Sigmoid colon (tissue), 7 donors: ENCODE measurements at regions of chr18 and their contacts with region 1.

Region 1: GRCh38 chr18:49944663-49945062 is 131.3 kb upstream of the ACAA2 start:
- DNase-seq: peak; percentile 69
- H3K4me3 ChIP-seq: no peak overlapping the region
- H3K27ac ChIP-seq: no peak overlapping the region
- H3K4me1 ChIP-seq: no peaks in the 10 kb centered on the region
- H3K27me3 ChIP-seq: no peaks in the 10 kb centered on the region
- CTCF ChIP-seq: peak in 3 of 4 experiments; percentile 15 to 47 (median 17)
- EP300 ChIP-seq: no peak
- POLR2A ChIP-seq: no peak

Region 2: DNA sequence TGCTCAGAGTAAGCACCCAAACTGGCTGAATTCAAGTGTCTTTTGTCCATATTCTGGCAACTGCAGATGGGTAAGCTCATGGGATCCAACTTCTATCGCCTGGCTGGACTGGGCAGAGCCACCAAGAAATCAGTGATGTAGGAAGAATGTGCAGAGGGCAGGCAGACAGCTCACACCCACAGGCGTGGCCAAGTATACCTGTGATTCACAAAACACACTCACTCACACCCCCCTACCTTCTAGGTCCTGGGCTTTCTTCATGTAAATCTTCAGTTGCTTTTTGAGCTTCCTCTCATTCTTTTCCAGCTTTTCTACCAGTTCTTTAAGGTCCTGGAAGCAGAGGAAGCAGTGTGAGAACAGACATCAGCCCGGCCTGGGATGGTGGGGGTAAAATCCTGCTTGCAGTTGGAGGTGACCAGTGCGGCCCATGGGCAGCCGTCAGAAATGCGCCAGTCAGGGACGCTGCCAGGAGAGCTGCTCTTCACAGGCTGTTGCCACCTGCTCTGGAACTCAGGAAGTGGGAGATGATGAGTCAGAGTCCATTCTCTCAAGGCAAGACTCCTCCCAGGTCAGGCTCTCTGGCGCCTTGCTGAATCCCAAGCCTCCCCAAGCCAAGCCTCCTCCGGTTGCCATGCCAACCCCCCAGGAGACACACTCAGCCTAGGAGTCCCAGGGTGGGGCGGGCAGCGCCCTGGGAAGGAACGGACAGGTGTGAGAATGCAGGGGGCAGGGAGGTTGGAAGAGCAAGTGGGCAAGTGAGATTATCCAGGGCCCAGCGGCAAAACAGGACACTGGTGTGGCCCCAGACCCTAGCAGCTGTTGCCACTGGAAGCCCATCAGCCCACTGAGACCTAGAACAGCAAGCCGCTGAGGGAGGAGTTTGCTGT is 95.1 kb before region 1 on chr18:
- intact Hi-C with region 1: no loop called
- DNase-seq: no peak
- H3K4me3 ChIP-seq: no peak overlapping the region
- H3K27ac ChIP-seq: no peak overlapping the region
- H3K4me1 ChIP-seq: peaks cover 0 to 9% (median 0%) of the 10 kb centered on the region in 4 donors
- H3K27me3 ChIP-seq: peaks cover 5 to 53% (median 7%) of the 10 kb centered on the region in 3 donors
- CTCF ChIP-seq: no peak
- EP300 ChIP-seq: no peak
- POLR2A ChIP-seq: no peak

Region 3: GRCh38 chr18:50203801-50204604 is 259.3 kb after region 1 on chr18:
- intact Hi-C with region 1: loop called (anchors 2 kb)
- DNase-seq: no peak
- H3K4me3 ChIP-seq: no peak overlapping the region
- H3K27ac ChIP-seq: no peak overlapping the region
- H3K4me1 ChIP-seq: no peaks in the 10 kb centered on the region
- H3K27me3 ChIP-seq: peaks cover 0 to 31% (median 3%) of the 10 kb centered on the region in 3 donors
- CTCF ChIP-seq: peak in 3 of 4 experiments; percentile 19 to 53 (median 38)
- EP300 ChIP-seq: no peak
- POLR2A ChIP-seq: no peak